Panc1 (cell line): ENCODE measurements at regions of chr1 and their contacts with region 1.

Region 1: GRCh38 chr1:22641906-22642636 is 1.4 kb upstream of the C1QC start:
- DNase-seq: peak; percentile 18
- ATAC-seq: peak; percentile 90
- H3K4me3 ChIP-seq: peak overlapping the region in 1 of 2 experiments; percentile 32; a peak in 2 of 4 replicates
- H3K27ac ChIP-seq: no peak overlapping the region
- H3K4me1 ChIP-seq: no peaks in the 10 kb centered on the region
- H3K27me3 ChIP-seq: no peaks in the 10 kb centered on the region
- CTCF ChIP-seq: peak; percentile 95

Region 2: GRCh38 chr1:22527555-22528296 is 114.3 kb before region 1 on chr1:
- CTCF ChIA-PET with region 1: no interaction called
- POLR2A ChIA-PET with region 1: no interaction called
- in situ Hi-C with region 1: no loop called
- intact Hi-C with region 1: loop called (anchors 5 kb)
- DNase-seq: no peak
- ATAC-seq: no peak
- H3K4me3 ChIP-seq: no peak overlapping the region
- H3K27ac ChIP-seq: no peak overlapping the region
- H3K4me1 ChIP-seq: no peaks in the 10 kb centered on the region
- H3K27me3 ChIP-seq: no peaks in the 10 kb centered on the region
- CTCF ChIP-seq: no peak

Region 3: DNA sequence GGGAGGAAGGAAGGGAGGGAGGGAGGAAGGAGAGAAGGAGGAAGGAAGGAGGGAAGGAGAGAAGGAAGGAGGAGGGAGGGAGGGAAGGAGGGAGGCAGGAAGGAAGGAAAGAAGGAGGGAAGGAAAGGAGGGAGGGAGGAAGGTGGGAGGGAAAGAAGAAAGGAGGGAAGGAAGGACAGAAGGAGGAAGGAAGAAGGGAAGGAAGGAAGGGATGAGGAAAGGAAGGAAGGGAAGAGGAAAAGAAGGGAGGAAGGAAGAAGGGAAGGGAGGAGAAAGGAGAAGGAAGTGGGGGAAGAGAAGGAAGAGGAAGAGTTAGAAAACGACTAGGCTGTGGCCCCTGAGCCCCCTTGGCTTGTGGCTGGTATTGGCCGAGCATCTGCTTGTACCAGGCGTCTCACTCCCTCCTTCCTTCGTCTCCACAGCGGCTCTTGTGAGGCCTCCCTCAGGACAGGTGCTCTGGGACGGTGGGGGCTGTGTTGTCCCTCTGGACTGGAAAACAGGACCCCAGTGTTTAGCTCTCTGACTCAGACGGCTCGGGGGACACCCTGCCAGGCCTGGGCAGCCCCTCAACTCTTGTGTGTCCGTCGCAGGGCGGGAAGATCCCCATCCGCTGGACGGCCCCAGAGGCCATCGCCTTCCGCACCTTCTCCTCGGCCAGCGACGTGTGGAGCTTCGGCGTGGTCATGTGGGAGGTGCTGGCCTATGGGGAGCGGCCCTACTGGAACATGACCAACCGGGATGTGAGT is 41.8 kb before region 1 on chr1:
- CTCF ChIA-PET with region 1: no interaction called
- POLR2A ChIA-PET with region 1: no interaction called
- in situ Hi-C with region 1: no loop called
- intact Hi-C with region 1: no loop called
- DNase-seq: no peak
- ATAC-seq: peak; percentile 81
- H3K4me3 ChIP-seq: no peak overlapping the region
- H3K27ac ChIP-seq: no peak overlapping the region
- H3K4me1 ChIP-seq: no peaks in the 10 kb centered on the region
- H3K27me3 ChIP-seq: peaks cover 5% of the 10 kb centered on the region
- CTCF ChIP-seq: no peak